ENCODE measurements at regions of chr17 and their contacts with region 1.

Region 1: DNA sequence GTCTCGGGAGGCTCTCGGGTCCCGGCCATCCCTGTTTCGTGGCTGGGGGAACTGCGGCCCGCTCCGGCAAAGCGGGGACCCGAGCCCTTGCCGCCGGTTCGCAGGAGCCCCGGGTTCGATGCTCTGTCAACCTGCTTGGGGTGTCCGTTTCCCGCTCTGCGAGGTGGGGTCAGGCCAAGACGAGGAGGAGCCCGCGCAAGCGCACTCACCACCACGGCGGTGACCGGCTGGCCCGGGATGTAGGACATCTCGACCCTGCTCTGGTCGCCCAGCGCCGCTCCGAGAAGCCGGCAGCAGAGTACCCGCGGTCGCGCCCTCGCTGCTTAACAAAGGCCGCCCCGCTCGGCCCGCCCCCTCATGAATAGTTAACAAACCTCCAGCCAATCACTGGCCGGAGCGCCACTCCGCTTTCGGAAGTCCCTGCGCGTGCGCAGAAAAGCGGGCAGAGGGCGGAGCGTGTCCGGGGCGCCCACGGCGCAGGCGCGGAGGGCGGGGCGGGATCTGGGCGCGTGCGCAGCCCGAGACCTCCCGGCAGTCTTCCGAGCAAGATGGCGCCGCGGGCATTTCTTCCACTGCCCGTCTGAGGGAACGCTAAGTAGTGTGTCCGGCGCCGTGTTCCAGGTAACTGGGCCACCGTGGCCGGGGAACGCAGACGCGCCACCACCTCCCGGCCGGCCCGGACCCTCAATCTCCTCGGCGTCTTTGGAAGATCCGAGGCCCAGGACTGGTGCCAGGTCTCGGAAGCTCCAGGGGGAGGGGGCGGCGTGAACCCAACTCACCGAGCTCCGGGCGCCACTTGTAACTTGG is at the starts of genes EMC6 and TAX1BP3:
- DNase-seq: peak; percentile 100

Region 2: DNA sequence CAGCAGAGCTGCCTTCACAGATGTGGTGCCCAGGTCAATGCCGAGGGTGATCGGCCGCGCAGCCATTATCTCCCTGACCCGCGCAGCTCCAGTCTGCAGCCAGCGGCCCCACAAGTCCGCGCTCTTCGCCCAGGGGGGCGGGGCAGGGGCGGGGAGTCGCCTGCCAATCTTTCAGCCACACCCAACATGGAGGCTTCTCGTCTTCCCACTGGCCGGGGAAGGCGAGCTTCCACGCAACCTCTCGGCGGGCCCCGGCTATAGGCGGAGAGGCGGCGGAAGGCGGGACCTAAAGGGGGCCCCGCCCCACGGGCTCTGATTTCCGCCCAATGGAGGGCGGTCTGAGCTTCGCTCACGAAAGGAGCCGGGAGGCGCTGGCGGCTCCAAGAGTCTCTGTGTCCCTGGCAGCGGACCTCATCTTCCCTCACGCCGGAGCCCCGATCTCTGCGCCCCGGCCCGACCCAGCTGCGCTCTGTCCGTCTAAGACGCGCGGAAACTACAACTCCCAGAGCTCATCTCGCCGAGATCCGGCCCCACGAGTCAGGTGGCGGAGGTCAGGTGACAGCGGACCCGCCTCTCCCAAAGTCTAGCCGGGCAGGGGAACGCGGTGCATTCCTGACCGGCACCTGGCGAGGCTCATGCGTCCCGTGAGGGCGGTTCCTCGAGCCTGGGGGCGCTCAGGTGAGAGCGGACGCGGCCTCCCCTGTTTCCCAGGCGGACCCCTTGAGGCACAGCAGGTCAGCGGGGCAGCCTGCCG is 32.2 kb before region 1 on chr17 and contains the starts of genes CTNS and SHPK:
- CTCF ChIA-PET with region 1: no interaction called
- POLR2A ChIA-PET with region 1: interaction called, 17 read pairs
- DNase-seq: peak; percentile 98